B cell (primary cell): ENCODE measurements at regions of chr5 and their contacts with region 1.

Region 1: DNA sequence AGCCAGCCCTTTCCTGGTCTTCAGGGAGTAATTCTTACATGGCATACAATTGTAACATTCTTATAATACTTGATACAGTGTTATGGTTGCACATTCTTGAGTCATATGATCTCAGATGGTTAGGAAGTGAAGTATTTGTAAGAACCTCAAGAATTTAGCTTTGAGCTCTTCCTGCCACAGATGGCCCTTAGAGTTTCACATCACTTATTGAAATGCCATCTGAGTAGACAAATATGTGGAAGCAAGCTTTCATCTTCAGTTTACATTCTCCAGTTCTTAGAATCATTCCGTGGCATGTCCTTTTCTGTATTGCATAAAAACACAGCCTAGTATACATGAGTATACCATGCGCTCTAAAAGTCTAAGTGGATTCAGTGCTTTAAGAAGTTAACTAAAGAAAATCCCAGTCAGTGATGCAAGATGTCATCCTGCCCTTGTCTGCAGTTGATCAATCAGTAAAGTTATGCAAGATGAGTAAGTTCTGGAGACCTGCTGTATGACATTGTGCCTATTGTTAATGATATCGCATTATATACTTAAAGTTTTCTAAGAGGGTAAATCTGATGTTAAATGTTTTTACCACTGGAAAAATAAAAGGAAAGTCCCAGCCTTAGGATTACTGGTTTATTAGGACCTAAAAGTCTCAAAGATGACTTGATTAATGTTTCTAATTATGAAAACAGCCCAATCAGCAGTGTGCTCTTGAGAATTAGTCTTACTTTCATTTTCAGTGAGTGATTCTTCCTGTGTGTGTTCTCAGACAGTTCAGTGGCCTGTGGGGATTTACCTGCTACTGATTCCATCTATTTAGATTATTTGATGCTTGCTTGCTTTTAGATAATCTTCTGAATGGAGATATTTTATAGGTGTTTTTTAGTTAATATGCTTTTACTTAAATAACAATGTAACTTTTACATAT is 29.4 kb downstream of the RHOBTB3 start:
- DNase-seq: peak; percentile 56
- ATAC-seq: peak; percentile 77
- H3K4me3 ChIP-seq: peak overlapping the region in 4 of 5 experiments; percentile 13 to 66 (median 38)
- H3K4me3 Mint-ChIP-seq: peak overlapping the region; percentile 91
- H3K27ac ChIP-seq: peak overlapping the region; percentile 70 to 82
- H3K27ac Mint-ChIP-seq: peak overlapping the region; percentile 93
- H3K4me1 ChIP-seq: peaks cover 29 to 34% of the 10 kb centered on the region in 2 donors
- H3K4me1 Mint-ChIP-seq: peaks cover 38% of the 10 kb centered on the region
- H3K27me3 ChIP-seq: no peaks in the 10 kb centered on the region
- H3K27me3 Mint-ChIP-seq: no peaks in the 10 kb centered on the region
- CTCF ChIP-seq: no peak

Region 2: GRCh38 chr5:95730730-95731570 is 29.6 kb before region 1 on chr5 and contains the start of gene RHOBTB3:
- CTCF ChIA-PET with region 1: interaction called, 3 read pairs
- POLR2A ChIA-PET with region 1: no interaction called
- intact Hi-C with region 1: loop called (anchors 2 kb)
- DNase-seq: peak; percentile 61
- ATAC-seq: peak; percentile 70
- H3K4me3 ChIP-seq: peak within 1 kb of the TSS; percentile 51 to 75 (median 60)
- H3K4me3 Mint-ChIP-seq: peak within 1 kb of the TSS; percentile 90
- H3K27ac ChIP-seq: no peak within 1 kb of the TSS
- H3K27ac Mint-ChIP-seq: peak within 1 kb of the TSS; percentile 78
- H3K4me1 ChIP-seq: peaks cover 8 to 13% of the 10 kb centered on the region in 2 donors
- H3K4me1 Mint-ChIP-seq: peaks cover 29% of the 10 kb centered on the region
- H3K27me3 ChIP-seq: peaks cover 0 to 10% (median 6%) of the 10 kb centered on the region in 4 experiments
- H3K27me3 Mint-ChIP-seq: peaks cover 12% of the 10 kb centered on the region
- CTCF ChIP-seq: no peak
- total RNA-seq, gene RHOBTB3: 5.0 and 5.3 TPM in 2 replicates

Region 3: DNA sequence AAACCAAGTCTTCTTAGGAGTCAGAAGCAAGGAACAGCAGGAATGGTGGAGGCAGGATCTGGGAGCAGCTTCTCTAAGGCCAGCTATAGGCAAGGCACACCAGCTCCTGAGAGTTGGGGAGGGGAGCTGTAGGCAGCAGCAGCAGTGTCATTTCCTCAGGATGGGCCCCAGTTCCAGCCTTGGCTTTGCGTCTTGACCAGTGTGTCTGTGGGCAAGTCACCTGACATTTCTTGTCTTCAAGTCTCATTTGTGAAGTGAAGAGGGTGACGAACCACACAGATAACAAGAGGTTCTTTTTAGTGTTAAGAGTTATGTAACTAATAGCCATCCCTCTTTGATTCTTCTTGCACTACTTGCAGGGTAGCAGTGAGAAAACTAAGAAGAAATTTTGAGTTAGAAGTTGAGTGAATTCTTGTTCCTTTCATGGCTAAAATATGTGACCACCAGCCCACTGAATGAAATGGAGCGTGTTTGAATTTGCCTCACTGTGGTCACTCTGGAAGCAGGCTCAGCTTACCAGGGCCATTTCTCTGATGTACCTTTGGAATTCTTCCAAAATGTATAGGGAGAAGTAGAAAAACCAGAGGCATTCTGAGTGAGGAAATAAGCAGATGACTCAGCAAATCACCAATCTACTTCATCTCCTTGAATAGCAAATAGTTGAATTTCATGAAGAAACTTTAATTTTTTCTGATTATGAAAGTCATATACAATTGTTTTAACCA is 13.0 kb after region 1 on chr5:
- CTCF ChIA-PET with region 1: no interaction called
- POLR2A ChIA-PET with region 1: no interaction called
- intact Hi-C with region 1: no loop called
- DNase-seq: no peak
- ATAC-seq: no peak
- H3K4me3 ChIP-seq: no peak overlapping the region
- H3K4me3 Mint-ChIP-seq: no peak overlapping the region
- H3K27ac ChIP-seq: no peak overlapping the region
- H3K27ac Mint-ChIP-seq: no peak overlapping the region
- H3K4me1 ChIP-seq: no peaks in the 10 kb centered on the region
- H3K4me1 Mint-ChIP-seq: no peaks in the 10 kb centered on the region
- H3K27me3 ChIP-seq: no peaks in the 10 kb centered on the region
- H3K27me3 Mint-ChIP-seq: no peaks in the 10 kb centered on the region
- CTCF ChIP-seq: no peak